ENCODE measurements at regions of chrX and their contacts with region 1.

Region 1: GRCh38 chrX:155056877-155057792 is 13.8 kb downstream of the CMC4 start:
- DNase-seq: peak; percentile 29 to 67 (median 51)
- H3K4me3 ChIP-seq: peak overlapping the region; percentile 3
- H3K4me3 Mint-ChIP-seq: peak overlapping the region in 6 of 7 donors; percentile 34 to 83 (median 70)
- H3K27ac ChIP-seq: no peak overlapping the region
- H3K27ac Mint-ChIP-seq: peak overlapping the region; percentile 36 to 93 (median 72)
- H3K4me1 ChIP-seq: peaks cover 9% of the 10 kb centered on the region
- H3K4me1 Mint-ChIP-seq: peaks cover 13 to 23% (median 22%) of the 10 kb centered on the region in 3 donors
- H3K27me3 ChIP-seq: no peaks in the 10 kb centered on the region
- H3K27me3 Mint-ChIP-seq: no peaks in the 10 kb centered on the region

Region 2: GRCh38 chrX:154980330-154981096 is 76.6 kb before region 1 on chrX:
- CTCF ChIA-PET with region 1: interaction called, 13 read pairs
- POLR2A ChIA-PET with region 1: no interaction called
- DNase-seq: peak; percentile 51 to 82 (median 68)
- H3K4me3 ChIP-seq: peak overlapping the region; percentile 54
- H3K4me3 Mint-ChIP-seq: peak overlapping the region; percentile 64 to 94 (median 85)
- H3K27ac ChIP-seq: no peak overlapping the region
- H3K27ac Mint-ChIP-seq: peak overlapping the region; percentile 18 to 96 (median 91)
- H3K4me1 ChIP-seq: peaks cover 5% of the 10 kb centered on the region
- H3K4me1 Mint-ChIP-seq: peaks cover 7 to 11% (median 10%) of the 10 kb centered on the region in 3 donors
- H3K27me3 ChIP-seq: no peaks in the 10 kb centered on the region
- H3K27me3 Mint-ChIP-seq: peaks cover 0 to 3% of the 10 kb centered on the region in 2 donors

Region 3: DNA sequence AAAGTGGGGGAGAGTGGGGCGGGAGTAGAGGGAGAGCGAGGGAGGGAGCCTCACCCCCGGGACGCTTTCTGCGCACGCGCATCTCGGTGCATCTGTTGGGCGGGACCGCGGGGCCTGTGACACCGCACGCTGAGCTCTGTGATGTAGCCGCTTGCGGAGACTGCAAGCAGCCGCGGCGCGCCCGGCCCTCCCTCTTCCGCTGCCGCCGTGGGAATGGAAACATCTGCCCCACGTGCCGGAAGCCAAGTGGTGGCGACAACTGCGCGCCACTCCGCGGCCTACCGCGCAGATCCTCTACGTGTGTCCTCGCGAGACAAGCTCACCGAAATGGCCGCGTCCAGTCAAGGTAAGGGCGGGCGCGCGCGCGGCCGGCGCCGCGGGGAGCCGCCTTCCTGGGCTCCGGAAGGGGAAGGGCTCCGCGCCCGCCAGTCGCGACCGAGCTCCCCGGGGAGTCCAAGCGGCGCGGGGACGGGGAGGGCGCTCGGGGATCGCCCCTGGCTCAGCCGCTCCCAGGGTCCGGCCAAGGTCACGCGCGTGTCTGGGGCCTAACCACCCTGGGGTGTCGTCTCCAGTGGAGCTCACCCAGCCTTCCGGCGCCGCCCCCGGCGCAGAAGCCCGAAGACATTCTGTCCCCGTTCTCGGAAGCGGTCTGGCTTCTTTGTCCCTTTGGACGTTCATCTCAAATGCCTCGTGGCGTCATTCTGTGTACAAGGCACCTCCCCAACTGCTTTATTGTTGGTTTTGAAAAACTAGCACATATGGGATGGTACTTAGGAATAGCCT is 30.2 kb before region 1 on chrX and contains the start of gene FUNDC2:
- CTCF ChIA-PET with region 1: interaction called, 7 read pairs
- POLR2A ChIA-PET with region 1: interaction called, 12 read pairs
- DNase-seq: peak; percentile 89 to 97 (median 93)
- H3K4me3 ChIP-seq: peak within 1 kb of the TSS; percentile 81
- H3K4me3 Mint-ChIP-seq: peak within 1 kb of the TSS; percentile 86 to 98 (median 90)
- H3K27ac ChIP-seq: peak within 1 kb of the TSS; percentile 90
- H3K27ac Mint-ChIP-seq: peak within 1 kb of the TSS; percentile 97 to 99 (median 97)
- H3K4me1 ChIP-seq: peaks cover 14% of the 10 kb centered on the region
- H3K4me1 Mint-ChIP-seq: peaks cover 20 to 35% (median 21%) of the 10 kb centered on the region in 3 donors
- H3K27me3 ChIP-seq: no peaks in the 10 kb centered on the region
- H3K27me3 Mint-ChIP-seq: peaks cover 0 to 4% of the 10 kb centered on the region in 2 donors
- total RNA-seq, gene FUNDC2: 96.4 to 104 TPM